ENCODE measurements at regions of chr2 and their contacts with region 1.

Region 1: GRCh38 chr2:208033758-208034502 is 8.6 kb upstream of the PLEKHM3 start:
- DNase-seq: peak; percentile 72 to 76
- ATAC-seq: peak; percentile 98

Region 2: DNA sequence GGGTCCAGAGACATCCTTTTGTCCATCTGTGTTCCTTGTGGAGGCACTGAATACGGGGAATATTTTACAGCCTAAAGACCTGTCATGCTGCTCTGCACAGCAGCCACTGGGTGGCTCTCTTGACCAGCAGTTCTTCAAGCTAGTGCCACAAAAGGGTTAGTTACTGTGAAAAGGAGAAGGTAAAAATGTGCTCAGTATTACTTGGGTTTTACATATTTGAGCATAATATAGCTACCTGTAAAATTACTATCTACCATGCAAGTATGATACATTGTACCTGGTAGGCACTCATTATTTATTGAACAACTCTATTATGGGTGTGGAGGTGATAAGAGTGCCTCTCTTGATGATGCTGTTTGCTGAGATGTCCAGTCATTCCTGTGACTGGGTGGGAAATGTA is 287.8 kb before region 1 on chr2:
- intact Hi-C with region 1: loop called (anchors 10 kb)
- DNase-seq: peak; percentile 32 to 56
- ATAC-seq: peak; percentile 75

Region 3: DNA sequence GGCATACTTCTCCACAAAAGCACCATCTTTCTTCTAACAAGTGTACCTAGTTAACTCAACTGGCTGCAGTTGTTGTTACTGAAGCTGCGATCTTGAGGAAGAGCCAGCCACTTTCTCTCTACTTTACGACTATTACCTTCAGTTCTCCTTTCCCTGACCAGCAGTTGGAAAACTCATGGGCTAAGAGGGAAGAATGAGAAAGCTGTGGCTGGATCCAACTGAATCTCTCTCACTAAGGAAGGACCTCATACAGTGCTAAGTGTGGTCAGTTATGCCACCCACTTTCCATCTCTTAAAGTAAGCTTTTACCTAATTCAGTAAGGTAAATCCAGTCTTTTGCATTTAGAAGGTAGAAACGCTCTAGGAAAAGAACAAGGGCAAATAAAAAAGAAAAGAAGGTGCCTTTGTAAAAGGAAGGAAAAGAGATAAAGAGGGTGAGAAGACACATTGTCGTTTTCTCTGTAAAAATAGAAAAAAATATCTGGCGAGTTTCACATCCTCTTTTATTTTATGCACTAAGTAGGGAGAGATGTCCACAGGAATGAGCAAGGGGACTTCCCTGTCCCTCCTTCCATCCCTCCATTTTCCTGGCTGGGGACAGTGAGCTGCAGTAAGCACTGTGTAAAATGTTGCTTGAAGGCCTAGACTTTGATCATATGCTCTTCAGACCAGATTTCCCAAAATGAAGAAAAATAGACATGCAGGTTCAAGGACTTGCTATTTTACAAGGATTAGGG is 82.0 kb before region 1 on chr2:
- intact Hi-C with region 1: no loop called
- DNase-seq: no peak
- ATAC-seq: no peak

Region 4: GRCh38 chr2:208249241-208249640 is 215.3 kb after region 1 on chr2:
- intact Hi-C with region 1: no loop called
- DNase-seq: no peak
- ATAC-seq: no peak

Measured in left colon (tissue), 2 donors.